Calu3 (cell line): ENCODE measurements at regions of chr1 and their contacts with region 1.

Region 1: GRCh38 chr1:46724991-46725735 is 6.2 kb upstream of the EFCAB14 start:
- DNase-seq: peak; percentile 73
- H3K4me3 Mint-ChIP-seq: no peak overlapping the region
- H3K27ac Mint-ChIP-seq: no peak overlapping the region
- H3K4me1 Mint-ChIP-seq: no peaks in the 10 kb centered on the region
- H3K27me3 Mint-ChIP-seq: peaks cover 37% of the 10 kb centered on the region
- CTCF ChIP-seq: peak; percentile 69

Region 2: DNA sequence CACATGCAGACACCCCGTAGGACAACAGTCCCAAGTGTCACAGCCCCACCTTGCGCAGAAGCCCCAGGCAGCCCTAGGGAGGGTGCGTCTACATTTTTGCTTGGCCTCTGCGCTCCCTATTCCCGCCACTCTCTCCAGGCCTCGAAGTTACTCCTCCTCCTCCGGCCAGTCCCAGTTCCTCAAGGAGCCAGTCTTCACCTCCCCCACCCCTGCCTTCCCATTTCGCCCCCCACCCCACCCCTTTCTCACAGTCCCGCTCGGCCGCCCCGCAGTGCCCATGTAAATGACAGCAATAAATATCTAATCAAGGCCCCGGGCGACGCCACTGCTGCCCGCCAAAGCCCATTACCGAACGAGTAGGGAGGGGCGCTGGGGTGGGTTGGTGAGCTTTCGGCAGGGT is 232.3 kb before region 1 on chr1:
- CTCF ChIA-PET with region 1: no interaction called
- intact Hi-C with region 1: no loop called
- DNase-seq: no peak
- H3K4me3 Mint-ChIP-seq: no peak overlapping the region
- H3K27ac Mint-ChIP-seq: no peak overlapping the region
- H3K4me1 Mint-ChIP-seq: peaks cover 23% of the 10 kb centered on the region
- H3K27me3 Mint-ChIP-seq: peaks cover 83% of the 10 kb centered on the region
- CTCF ChIP-seq: no peak

Region 3: GRCh38 chr1:46622344-46622743 is 102.8 kb before region 1 on chr1:
- CTCF ChIA-PET with region 1: interaction called, 4 read pairs
- intact Hi-C with region 1: loop called (anchors 2 kb)
- DNase-seq: peak; percentile 63
- H3K4me3 Mint-ChIP-seq: no peak overlapping the region
- H3K27ac Mint-ChIP-seq: no peak overlapping the region
- H3K4me1 Mint-ChIP-seq: no peaks in the 10 kb centered on the region
- H3K27me3 Mint-ChIP-seq: peaks cover 12% of the 10 kb centered on the region
- CTCF ChIP-seq: no peak